ENCODE measurements at regions of chr6 and their contacts with region 1.

Region 1: GRCh38 chr6:10429638-10430427 is 15.0 kb upstream of the TFAP2A start:
- DNase-seq: no peak
- ATAC-seq: peak in 3 of 4 donors; percentile 52 to 58 (median 55)
- H3K4me3 ChIP-seq: no peak overlapping the region
- H3K27ac ChIP-seq: no peak overlapping the region
- H3K4me1 ChIP-seq: peaks cover 0 to 18% (median 8%) of the 10 kb centered on the region in 12 donors
- H3K27me3 ChIP-seq: peaks cover 0 to 64% (median 22%) of the 10 kb centered on the region in 9 donors
- CTCF ChIP-seq: peak in 10 of 12 donors; percentile 16 to 54 (median 43)
- POLR2A ChIP-seq: no peak

Region 2: GRCh38 chr6:8707956-8708772 is 1721.7 kb before region 1 on chr6:
- intact Hi-C with region 1: loop called in 3 of 10 experiments (anchors 5 to 10 kb)
- DNase-seq: no peak
- ATAC-seq: peak in 2 of 4 donors; percentile 59 to 65
- H3K4me3 ChIP-seq: peak overlapping the region in 7 of 12 donors; percentile 10 to 40 (median 34)
- H3K27ac ChIP-seq: no peak overlapping the region
- H3K4me1 ChIP-seq: no peaks in the 10 kb centered on the region
- H3K27me3 ChIP-seq: no peaks in the 10 kb centered on the region
- CTCF ChIP-seq: peak in 9 of 12 donors; percentile 14 to 45 (median 30)
- POLR2A ChIP-seq: no peak

Region 3: GRCh38 chr6:8983188-8983688 is 1446.6 kb before region 1 on chr6:
- intact Hi-C with region 1: loop called in 9 of 10 experiments (anchors 2 to 10 kb)
- DNase-seq: peak; percentile 24 to 64 (median 34)
- ATAC-seq: peak in 3 of 4 donors; percentile 63 to 83 (median 66)
- H3K4me3 ChIP-seq: no peak overlapping the region
- H3K27ac ChIP-seq: no peak overlapping the region
- H3K4me1 ChIP-seq: peaks cover 0 to 5% (median 0%) of the 10 kb centered on the region in 12 donors
- H3K27me3 ChIP-seq: peaks cover 0 to 22% (median 0%) of the 10 kb centered on the region in 9 donors
- CTCF ChIP-seq: peak; percentile 80 to 96 (median 89)
- POLR2A ChIP-seq: no peak

Region 4: DNA sequence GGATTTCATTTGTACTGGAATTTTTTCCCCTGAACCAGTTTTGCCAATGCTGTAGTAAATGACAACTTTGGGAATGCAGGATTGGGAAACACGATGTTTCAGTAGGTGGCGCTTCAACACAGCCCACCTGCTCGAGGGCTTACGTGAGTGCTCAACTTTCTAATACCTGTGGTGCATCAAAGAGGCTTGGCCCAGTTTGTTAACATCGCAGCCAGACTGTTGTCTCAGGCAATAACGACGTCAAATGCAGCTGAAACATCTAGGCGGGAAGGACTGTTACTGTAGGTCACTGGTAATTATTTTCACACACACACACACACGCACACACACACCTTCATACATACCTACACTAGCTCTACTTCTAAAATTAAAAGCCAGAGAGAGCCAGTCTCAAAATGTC is 1179.0 kb before region 1 on chr6:
- intact Hi-C with region 1: loop called in 1 of 10 experiments (anchors 10 kb)
- DNase-seq: peak in 1 of 5 donors; percentile 26
- ATAC-seq: peak in 2 of 4 donors; percentile 34 to 62
- H3K4me3 ChIP-seq: no peak overlapping the region
- H3K27ac ChIP-seq: no peak overlapping the region
- H3K4me1 ChIP-seq: no peaks in the 10 kb centered on the region
- H3K27me3 ChIP-seq: no peaks in the 10 kb centered on the region
- CTCF ChIP-seq: peak in 11 of 12 donors; percentile 30 to 55 (median 40)
- POLR2A ChIP-seq: no peak

Region 5: DNA sequence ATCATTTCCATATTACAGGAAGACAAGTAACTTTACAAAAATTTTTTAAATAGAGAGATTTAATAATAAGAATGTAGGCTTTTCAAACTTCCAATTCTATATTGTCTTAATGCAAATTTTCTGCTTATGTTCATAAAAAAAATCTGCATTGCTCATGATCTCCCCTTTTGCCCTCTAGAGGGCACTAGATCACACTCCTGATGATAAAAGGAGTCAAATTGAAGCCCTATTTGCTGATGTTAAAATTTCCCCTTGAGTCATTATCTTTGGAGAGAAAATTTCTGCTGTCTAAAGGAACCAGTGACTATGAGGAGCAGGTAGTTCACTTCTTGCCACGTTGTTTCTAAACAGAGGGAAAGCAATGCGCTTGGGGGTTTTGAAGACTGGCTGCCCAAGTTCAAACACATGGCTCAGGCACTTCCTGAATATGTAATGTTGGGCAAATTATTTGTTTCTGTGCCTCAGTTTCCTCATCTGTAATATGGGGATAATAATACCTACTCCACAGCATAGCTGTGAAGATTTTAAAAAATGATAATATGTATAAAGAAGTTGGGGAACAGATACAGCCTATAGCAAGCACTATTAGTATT is 889.2 kb before region 1 on chr6:
- intact Hi-C with region 1: loop called in 4 of 10 experiments (anchors 5 to 10 kb)
- DNase-seq: no peak
- ATAC-seq: no peak
- H3K4me3 ChIP-seq: no peak overlapping the region
- H3K27ac ChIP-seq: no peak overlapping the region
- H3K4me1 ChIP-seq: no peaks in the 10 kb centered on the region
- H3K27me3 ChIP-seq: peaks cover 0 to 3% (median 0%) of the 10 kb centered on the region in 9 donors
- CTCF ChIP-seq: peak; percentile 37 to 66 (median 56)
- POLR2A ChIP-seq: no peak

Region 6: GRCh38 chr6:10030942-10031537 is 398.8 kb before region 1 on chr6:
- intact Hi-C with region 1: loop called in 2 of 10 experiments (anchors 10 kb)
- DNase-seq: no peak
- ATAC-seq: no peak
- H3K4me3 ChIP-seq: no peak overlapping the region
- H3K27ac ChIP-seq: no peak overlapping the region
- H3K4me1 ChIP-seq: no peaks in the 10 kb centered on the region
- H3K27me3 ChIP-seq: peaks cover 0 to 14% (median 0%) of the 10 kb centered on the region in 9 donors
- CTCF ChIP-seq: peak in 11 of 12 donors; percentile 14 to 51 (median 40)
- POLR2A ChIP-seq: no peak

Region 7: DNA sequence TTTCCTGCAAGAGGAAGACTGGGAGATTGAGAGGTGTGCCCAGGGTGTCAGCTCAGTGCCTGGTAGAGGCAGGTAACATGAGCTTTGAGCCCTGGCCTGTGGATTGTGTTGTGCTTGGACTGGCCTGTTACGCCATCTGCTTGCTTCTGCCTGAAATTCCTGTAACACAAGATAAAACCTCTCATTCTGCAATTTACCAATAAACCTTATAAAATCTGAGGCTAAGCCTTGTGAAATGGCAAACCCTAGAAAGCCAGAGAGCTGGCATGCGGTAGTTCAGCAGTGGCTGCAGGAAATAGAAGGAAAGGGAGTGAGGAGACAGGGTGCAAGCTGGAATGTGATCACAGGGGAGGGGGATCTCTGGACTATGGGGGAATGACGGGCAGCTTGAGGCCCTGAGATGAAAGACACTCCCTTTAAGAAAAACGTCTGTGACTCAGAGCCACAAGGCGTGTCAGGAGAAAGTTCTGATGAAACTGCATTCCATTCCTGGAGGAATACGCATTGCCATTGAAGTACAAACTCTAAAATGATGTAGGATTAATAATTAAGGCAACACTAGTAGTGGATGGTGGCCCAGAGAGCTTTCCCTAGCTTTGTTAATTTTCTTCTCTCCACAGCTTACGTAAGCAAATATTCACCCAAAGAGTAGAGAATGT is 11.3 kb after region 1 on chr6:
- intact Hi-C with region 1: no loop called
- DNase-seq: no peak
- ATAC-seq: no peak
- H3K4me3 ChIP-seq: no peak overlapping the region
- H3K27ac ChIP-seq: no peak overlapping the region
- H3K4me1 ChIP-seq: no peaks in the 10 kb centered on the region
- H3K27me3 ChIP-seq: peaks cover 0 to 26% (median 0%) of the 10 kb centered on the region in 9 donors
- CTCF ChIP-seq: no peak
- POLR2A ChIP-seq: no peak

Measured in heart left ventricle (tissue), 16 donors.